ENCODE measurements at regions of chr2 and their contacts with region 1.

Region 1: GRCh38 chr2:177148477-177149154 is 64.0 kb upstream of the HNRNPA3 start:
- DNase-seq: peak; percentile 83
- ATAC-seq: peak; percentile 96
- H3K4me3 Mint-ChIP-seq: peak overlapping the region; percentile 76
- H3K27ac Mint-ChIP-seq: peak overlapping the region; percentile 53
- H3K4me1 Mint-ChIP-seq: peaks cover 13% of the 10 kb centered on the region
- H3K27me3 Mint-ChIP-seq: peaks cover 42% of the 10 kb centered on the region

Region 2: DNA sequence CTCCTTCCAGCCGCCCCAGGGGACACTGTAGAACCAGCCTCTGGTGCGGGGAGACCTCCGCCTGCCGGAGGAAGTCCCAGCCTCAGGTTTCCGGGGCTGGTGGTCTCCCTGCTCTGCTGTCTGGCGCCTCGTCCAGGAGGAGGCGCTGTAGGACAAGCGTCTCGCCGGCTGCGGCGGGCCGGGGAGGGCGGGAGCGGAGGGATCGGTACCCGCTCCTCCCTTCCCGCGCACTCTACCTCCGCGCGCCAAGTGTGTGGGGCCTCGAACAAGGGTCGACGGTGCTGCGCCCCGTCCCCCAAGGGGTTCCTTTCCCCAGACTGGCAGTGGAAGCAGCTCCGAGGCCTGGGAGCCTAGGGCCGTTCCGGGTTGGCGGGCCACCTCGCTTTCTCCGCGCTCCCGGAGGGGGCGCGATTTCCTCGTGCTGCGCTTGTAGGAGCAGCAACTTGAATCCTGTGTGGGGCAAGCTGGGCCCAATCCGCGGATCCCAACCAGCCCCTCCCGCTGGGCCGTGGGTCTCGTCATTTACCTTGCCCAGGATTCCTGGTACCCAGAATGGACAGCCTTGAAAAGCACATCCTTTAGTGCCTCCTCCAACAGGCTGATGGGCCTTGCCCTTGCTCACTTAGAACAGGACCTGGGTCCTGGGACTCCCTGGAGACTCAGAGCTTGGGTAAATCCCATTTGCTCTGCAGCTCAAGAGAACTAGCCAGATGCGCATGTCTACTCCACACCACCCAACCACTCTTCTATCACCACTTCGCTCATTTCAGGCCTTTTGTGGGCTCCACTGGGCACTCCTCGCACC is 1007.9 kb before region 1 on chr2:
- CTCF ChIA-PET with region 1: interaction called, 17 read pairs
- POLR2A ChIA-PET with region 1: no interaction called
- DNase-seq: peak; percentile 79
- ATAC-seq: peak; percentile 93
- H3K4me3 Mint-ChIP-seq: peak overlapping the region; percentile 6
- H3K27ac Mint-ChIP-seq: no peak overlapping the region
- H3K4me1 Mint-ChIP-seq: peaks cover 29% of the 10 kb centered on the region
- H3K27me3 Mint-ChIP-seq: peaks cover 69% of the 10 kb centered on the region

Region 3: DNA sequence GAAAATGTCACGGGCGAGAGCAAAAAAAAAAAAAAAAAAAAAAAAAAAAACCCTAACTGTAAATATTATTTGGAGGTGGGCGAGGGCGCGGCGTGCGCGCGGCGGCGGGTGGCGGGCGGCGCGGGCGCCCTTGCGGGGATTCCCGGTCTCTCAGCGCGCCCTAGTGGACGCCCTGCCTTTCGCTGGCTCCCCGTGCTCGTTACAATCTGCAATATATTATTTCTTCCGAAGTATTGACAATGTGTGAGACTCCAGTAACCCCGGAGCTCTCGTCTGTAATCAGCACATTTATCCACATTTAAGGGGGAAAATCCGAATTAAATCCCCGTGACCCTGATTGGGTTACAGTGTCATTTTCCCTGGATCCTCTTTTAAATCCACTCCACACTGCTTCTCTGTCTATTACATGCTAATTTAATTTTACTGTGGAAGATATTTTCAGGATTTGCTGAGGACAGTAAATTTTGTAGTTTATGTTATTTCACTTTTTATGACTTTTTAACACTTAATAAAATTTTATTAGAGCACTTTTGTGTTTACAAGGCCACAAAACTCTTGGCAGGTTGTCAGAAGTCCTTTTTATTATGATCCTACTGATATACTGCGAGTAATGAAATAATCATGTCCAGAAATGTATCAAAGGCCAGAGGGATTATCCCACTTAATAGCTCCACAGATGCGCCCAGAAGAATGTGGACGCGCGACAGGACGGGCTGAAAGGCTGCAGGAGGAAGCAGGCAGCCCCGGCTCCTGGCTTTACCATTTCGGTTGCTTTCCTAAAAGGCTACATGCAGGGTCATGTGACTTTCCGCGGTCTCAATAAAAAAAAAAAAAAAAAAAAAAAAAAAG is 510.2 kb before region 1 on chr2:
- CTCF ChIA-PET with region 1: interaction called, 19 read pairs
- POLR2A ChIA-PET with region 1: no interaction called
- DNase-seq: peak; percentile 70
- ATAC-seq: peak; percentile 94
- H3K4me3 Mint-ChIP-seq: peak overlapping the region; percentile 61
- H3K27ac Mint-ChIP-seq: no peak overlapping the region
- H3K4me1 Mint-ChIP-seq: peaks cover 7% of the 10 kb centered on the region
- H3K27me3 Mint-ChIP-seq: peaks cover 60% of the 10 kb centered on the region

Region 4: GRCh38 chr2:176682278-176682677 is 466.3 kb before region 1 on chr2:
- CTCF ChIA-PET with region 1: interaction called, 11 read pairs
- POLR2A ChIA-PET with region 1: no interaction called
- DNase-seq: no peak
- ATAC-seq: no peak
- H3K4me3 Mint-ChIP-seq: no peak overlapping the region
- H3K27ac Mint-ChIP-seq: no peak overlapping the region
- H3K4me1 Mint-ChIP-seq: no peaks in the 10 kb centered on the region
- H3K27me3 Mint-ChIP-seq: peaks cover 31% of the 10 kb centered on the region

Region 5: DNA sequence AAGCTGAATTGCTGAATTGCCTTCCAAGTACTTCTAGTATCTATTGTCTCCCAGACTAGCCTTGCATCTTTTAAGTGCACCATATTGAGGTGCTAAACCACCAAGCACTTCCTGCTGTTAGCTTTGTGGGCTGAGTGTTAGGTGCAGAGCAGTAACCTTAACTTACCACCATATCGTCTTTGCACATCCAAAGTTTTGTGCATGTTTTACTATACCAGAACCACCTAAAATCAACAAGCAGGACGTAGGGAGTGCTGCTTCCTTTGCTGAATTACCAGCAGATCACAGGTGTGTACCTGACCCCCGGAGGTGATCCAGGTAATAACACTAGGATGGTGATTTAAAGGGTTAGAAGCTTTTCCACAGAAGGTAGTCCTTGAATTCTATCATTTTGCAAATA is 295.9 kb before region 1 on chr2:
- CTCF ChIA-PET with region 1: interaction called, 15 read pairs
- POLR2A ChIA-PET with region 1: no interaction called
- DNase-seq: peak; percentile 81
- ATAC-seq: peak; percentile 98
- H3K4me3 Mint-ChIP-seq: peak overlapping the region; percentile 6
- H3K27ac Mint-ChIP-seq: peak overlapping the region; percentile 81
- H3K4me1 Mint-ChIP-seq: peaks cover 65% of the 10 kb centered on the region
- H3K27me3 Mint-ChIP-seq: no peaks in the 10 kb centered on the region

Region 6: DNA sequence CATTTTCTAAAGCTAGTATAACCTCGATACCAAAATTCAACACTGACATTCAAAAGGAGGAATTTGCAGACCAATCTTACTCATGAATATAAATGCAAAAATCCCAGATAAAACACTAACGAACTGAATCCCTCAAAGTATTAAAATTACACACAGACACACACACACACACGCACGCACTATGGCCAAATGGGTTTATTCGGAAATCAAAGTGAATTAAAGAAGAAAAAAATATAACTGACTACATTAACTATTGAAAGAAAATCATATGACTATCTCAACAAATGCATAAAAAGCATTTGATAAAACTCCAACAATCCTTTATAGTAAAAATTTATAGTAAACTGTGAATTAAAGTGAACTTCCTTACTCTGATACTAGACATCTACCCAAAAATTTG is 33.9 kb before region 1 on chr2:
- CTCF ChIA-PET with region 1: interaction called, 12 read pairs
- POLR2A ChIA-PET with region 1: no interaction called
- DNase-seq: no peak
- ATAC-seq: no peak
- H3K4me3 Mint-ChIP-seq: no peak overlapping the region
- H3K27ac Mint-ChIP-seq: no peak overlapping the region
- H3K4me1 Mint-ChIP-seq: no peaks in the 10 kb centered on the region
- H3K27me3 Mint-ChIP-seq: peaks cover 8% of the 10 kb centered on the region